ENCODE measurements at regions of chr7 and their contacts with region 1.

Region 1: GRCh38 chr7:104814631-104815400 is 199.2 kb upstream of the KMT2E start:
- DNase-seq: no peak
- H3K4me3 ChIP-seq: no peak overlapping the region
- H3K27ac ChIP-seq: no peak overlapping the region
- H3K4me1 ChIP-seq: no peaks in the 10 kb centered on the region
- H3K27me3 ChIP-seq: no peaks in the 10 kb centered on the region
- CTCF ChIP-seq: no peak
- EP300 ChIP-seq: no peak
- POLR2A ChIP-seq: no peak

Region 2: GRCh38 chr7:104767826-104768536 is 46.8 kb before region 1 on chr7:
- in situ Hi-C with region 1: no loop called
- intact Hi-C with region 1: loop called (anchors 1 kb)
- DNase-seq: no peak
- H3K4me3 ChIP-seq: no peak overlapping the region
- H3K27ac ChIP-seq: no peak overlapping the region
- H3K4me1 ChIP-seq: no peaks in the 10 kb centered on the region
- H3K27me3 ChIP-seq: no peaks in the 10 kb centered on the region
- CTCF ChIP-seq: no peak
- EP300 ChIP-seq: no peak
- POLR2A ChIP-seq: no peak

Region 3: DNA sequence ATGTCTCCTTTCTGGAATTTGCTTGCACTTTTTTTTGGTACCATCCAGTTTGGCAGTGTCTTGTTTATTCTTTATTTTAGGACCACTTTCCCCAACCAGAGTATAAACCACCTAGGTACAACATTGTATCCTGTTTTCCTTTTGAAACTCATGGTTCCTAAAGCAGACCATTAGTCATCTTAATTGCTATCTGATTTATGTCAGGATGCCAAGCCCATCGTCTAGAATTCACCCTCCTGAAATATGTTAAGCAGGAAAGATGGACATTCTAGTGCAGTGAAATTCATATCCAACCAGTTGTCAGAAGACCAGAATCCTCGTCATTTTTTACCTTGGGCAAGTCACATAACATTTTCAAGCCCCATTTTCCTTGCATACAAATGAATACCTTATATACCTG is 24.4 kb before region 1 on chr7:
- in situ Hi-C with region 1: no loop called
- intact Hi-C with region 1: no loop called
- DNase-seq: no peak
- H3K4me3 ChIP-seq: no peak overlapping the region
- H3K27ac ChIP-seq: no peak overlapping the region
- H3K4me1 ChIP-seq: no peaks in the 10 kb centered on the region
- H3K27me3 ChIP-seq: peaks cover 14% of the 10 kb centered on the region
- CTCF ChIP-seq: no peak
- EP300 ChIP-seq: no peak
- POLR2A ChIP-seq: no peak

Region 4: GRCh38 chr7:105161366-105161765 is 346.6 kb after region 1 on chr7:
- in situ Hi-C with region 1: no loop called
- intact Hi-C with region 1: no loop called
- DNase-seq: no peak
- H3K4me3 ChIP-seq: no peak overlapping the region
- H3K27ac ChIP-seq: no peak overlapping the region
- H3K4me1 ChIP-seq: no peaks in the 10 kb centered on the region
- H3K27me3 ChIP-seq: no peaks in the 10 kb centered on the region
- CTCF ChIP-seq: no peak
- EP300 ChIP-seq: no peak
- POLR2A ChIP-seq: no peak

Measured in transverse colon (tissue), 4 donors.